Panc1 (cell line): ENCODE measurements at regions of chr17 and their contacts with region 1.

Region 1: DNA sequence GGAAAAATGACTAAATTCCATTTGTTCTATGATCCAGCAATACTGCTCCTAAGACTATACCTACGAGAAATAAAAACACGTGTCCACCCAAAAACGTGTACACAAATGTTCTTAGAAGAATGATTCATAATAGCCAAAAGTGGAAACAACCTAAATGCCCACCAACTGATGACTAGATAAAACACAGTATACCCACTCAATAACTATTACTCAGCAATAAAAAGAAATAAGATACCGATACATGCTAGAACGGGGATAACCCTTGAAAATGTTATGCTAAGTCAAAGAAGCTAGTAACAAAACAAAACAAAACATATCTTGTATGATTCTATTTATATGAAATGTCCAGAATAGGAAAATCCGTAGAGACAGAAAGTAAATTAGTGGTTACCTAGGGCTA is 17.6 kb downstream of the CCL16 start:
- DNase-seq: no peak
- ATAC-seq: no peak
- H3K4me3 ChIP-seq: no peak overlapping the region
- H3K27ac ChIP-seq: no peak overlapping the region
- H3K4me1 ChIP-seq: no peaks in the 10 kb centered on the region
- H3K27me3 ChIP-seq: peaks cover 17% of the 10 kb centered on the region
- CTCF ChIP-seq: no peak

Region 2: GRCh38 chr17:35713069-35713728 is 250.5 kb before region 1 on chr17:
- CTCF ChIA-PET with region 1: no interaction called
- POLR2A ChIA-PET with region 1: no interaction called
- in situ Hi-C with region 1: no loop called
- intact Hi-C with region 1: no loop called
- DNase-seq: no peak
- ATAC-seq: peak; percentile 12; the same call in 1 of the 2 replicates
- H3K4me3 ChIP-seq: no peak overlapping the region
- H3K27ac ChIP-seq: no peak overlapping the region
- H3K4me1 ChIP-seq: no peaks in the 10 kb centered on the region
- H3K27me3 ChIP-seq: no peaks in the 10 kb centered on the region
- CTCF ChIP-seq: no peak

Region 3: GRCh38 chr17:35949401-35949800 is 14.3 kb before region 1 on chr17:
- CTCF ChIA-PET with region 1: interaction called, 10 read pairs
- POLR2A ChIA-PET with region 1: no interaction called
- in situ Hi-C with region 1: no loop called
- intact Hi-C with region 1: no loop called
- DNase-seq: no peak
- ATAC-seq: no peak
- H3K4me3 ChIP-seq: no peak overlapping the region
- H3K27ac ChIP-seq: no peak overlapping the region
- H3K4me1 ChIP-seq: no peaks in the 10 kb centered on the region
- H3K27me3 ChIP-seq: no peaks in the 10 kb centered on the region
- CTCF ChIP-seq: no peak

Region 4: DNA sequence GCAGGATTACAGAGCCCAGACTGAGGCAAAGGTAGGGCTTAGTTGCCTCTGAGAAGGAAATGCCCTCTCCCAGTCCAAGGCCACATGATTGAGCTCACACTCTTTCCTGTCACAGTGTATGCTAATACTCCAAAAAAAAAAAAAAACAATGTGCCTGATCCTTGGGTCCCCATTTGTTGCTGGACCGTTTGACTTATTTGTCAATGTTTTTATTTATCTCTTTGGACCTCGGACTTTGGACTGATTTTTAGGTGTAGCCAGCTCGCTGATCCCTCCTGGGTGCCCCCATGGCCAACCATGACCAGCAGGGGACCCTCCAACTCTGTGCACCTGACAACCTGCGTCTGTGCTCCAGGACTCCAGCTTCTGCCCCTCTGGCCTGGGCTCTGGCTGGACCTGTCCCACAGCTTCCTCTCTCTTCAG is 18.3 kb after region 1 on chr17:
- CTCF ChIA-PET with region 1: no interaction called
- POLR2A ChIA-PET with region 1: no interaction called
- in situ Hi-C with region 1: no loop called
- intact Hi-C with region 1: no loop called
- DNase-seq: no peak
- ATAC-seq: 0 out of 2 replicates have a peak, but pooled peaks have one; percentile 42
- H3K4me3 ChIP-seq: no peak overlapping the region
- H3K27ac ChIP-seq: no peak overlapping the region
- H3K4me1 ChIP-seq: no peaks in the 10 kb centered on the region
- H3K27me3 ChIP-seq: no peaks in the 10 kb centered on the region; the same call in 1 of the 2 replicates
- CTCF ChIP-seq: no peak; the same call in 1 of the 2 replicates